MCF 10A (cell line): ENCODE measurements at regions of chr11 and their contacts with region 1.

Region 1: GRCh38 chr11:74726547-74727182 is 4.6 kb downstream of the CHRDL2 start:
- DNase-seq: peak; percentile 73
- H3K4me3 Mint-ChIP-seq: no peak overlapping the region
- H3K27ac Mint-ChIP-seq: no peak overlapping the region
- H3K4me1 Mint-ChIP-seq: peaks cover 6% of the 10 kb centered on the region
- H3K27me3 Mint-ChIP-seq: peaks cover 46% of the 10 kb centered on the region
- CTCF ChIP-seq: peak; percentile 85

Region 2: DNA sequence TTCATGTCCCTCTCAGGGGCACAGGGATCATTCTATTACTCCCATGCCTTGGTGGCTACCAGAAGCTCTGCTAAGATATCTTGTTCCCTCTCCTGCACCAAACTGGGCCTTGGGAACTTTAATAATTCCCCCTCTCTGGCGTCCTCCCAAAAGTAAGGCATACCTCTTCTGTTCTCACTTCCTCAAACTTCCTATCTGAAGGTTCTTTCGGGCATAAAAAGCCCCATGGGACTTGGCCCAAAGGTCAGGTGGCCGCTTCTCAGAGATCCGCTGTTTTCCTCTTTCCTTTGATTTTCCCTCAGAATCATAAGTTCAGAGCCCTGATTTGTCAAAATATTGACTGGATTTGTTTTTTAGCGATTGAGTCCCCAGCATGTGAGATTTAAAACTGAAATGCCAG is 121.3 kb before region 1 on chr11:
- CTCF ChIA-PET with region 1: interaction called, 20 read pairs
- POLR2A ChIA-PET with region 1: no interaction called
- intact Hi-C with region 1: no loop called
- DNase-seq: no peak
- H3K4me3 Mint-ChIP-seq: no peak overlapping the region
- H3K27ac Mint-ChIP-seq: no peak overlapping the region
- H3K4me1 Mint-ChIP-seq: no peaks in the 10 kb centered on the region
- H3K27me3 Mint-ChIP-seq: no peaks in the 10 kb centered on the region
- CTCF ChIP-seq: no peak

Region 3: GRCh38 chr11:74634537-74634936 is 92.1 kb before region 1 on chr11:
- CTCF ChIA-PET with region 1: interaction called, 82 read pairs
- POLR2A ChIA-PET with region 1: interaction called, 3 read pairs
- intact Hi-C with region 1: loop called (anchors 1 kb)
- DNase-seq: peak; percentile 94
- H3K4me3 Mint-ChIP-seq: no peak overlapping the region
- H3K27ac Mint-ChIP-seq: no peak overlapping the region
- H3K4me1 Mint-ChIP-seq: peaks cover 40% of the 10 kb centered on the region
- H3K27me3 Mint-ChIP-seq: no peaks in the 10 kb centered on the region
- CTCF ChIP-seq: peak; percentile 33

Region 4: GRCh38 chr11:74687237-74688023 is 39.2 kb before region 1 on chr11:
- CTCF ChIA-PET with region 1: interaction called, 5 read pairs
- POLR2A ChIA-PET with region 1: no interaction called
- intact Hi-C with region 1: loop called (anchors 5 kb)
- DNase-seq: peak; percentile 27
- H3K4me3 Mint-ChIP-seq: no peak overlapping the region
- H3K27ac Mint-ChIP-seq: no peak overlapping the region
- H3K4me1 Mint-ChIP-seq: peaks cover 20% of the 10 kb centered on the region
- H3K27me3 Mint-ChIP-seq: no peaks in the 10 kb centered on the region
- CTCF ChIP-seq: no peak

Region 5: DNA sequence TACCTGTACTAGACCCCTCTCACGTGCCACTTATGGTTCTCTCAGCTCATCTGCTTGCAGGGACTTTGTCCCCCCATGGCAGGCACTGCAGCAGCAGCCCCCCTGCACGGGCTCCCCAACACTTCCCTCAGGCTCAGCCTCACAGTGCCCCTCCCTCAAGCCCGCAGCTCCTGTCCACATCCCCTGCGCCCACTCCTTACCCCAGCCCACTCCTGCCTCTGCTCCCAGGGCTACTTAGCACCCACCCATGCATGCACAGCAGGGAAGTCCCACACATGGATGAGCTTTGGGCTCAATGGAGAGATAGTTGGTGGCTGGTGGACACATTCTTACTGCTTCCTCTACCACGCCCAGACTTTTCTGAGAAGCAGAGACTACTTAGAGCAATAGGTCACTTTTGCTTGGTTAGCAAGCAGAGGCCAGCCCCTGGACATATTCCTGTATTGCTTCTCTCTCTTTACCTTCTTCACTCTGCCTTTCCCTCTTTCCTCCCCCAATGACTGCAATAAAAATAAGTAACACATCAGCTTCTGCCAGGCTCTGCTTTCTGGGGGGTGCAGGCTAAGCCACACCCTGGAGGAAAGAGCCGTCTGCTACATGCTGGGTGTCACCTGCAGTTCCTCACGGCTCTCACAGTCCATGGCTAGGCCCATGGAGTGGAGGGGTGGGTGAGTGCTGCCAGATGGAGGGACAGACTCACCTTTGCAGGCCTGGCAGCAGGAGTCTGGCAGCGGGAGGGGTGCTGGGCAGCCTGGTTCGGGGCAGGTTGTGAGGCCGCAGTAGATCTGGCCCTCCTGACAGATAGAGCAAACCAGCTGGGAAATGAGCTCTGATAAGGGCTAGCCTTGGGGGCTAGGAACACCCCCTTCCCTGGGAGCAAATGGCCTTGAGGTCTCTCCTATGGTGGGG is 18.8 kb before region 1 on chr11:
- CTCF ChIA-PET with region 1: interaction called, 69 read pairs
- POLR2A ChIA-PET with region 1: interaction called, 6 read pairs
- intact Hi-C with region 1: no loop called
- DNase-seq: no peak
- H3K4me3 Mint-ChIP-seq: no peak overlapping the region
- H3K27ac Mint-ChIP-seq: no peak overlapping the region
- H3K4me1 Mint-ChIP-seq: no peaks in the 10 kb centered on the region
- H3K27me3 Mint-ChIP-seq: no peaks in the 10 kb centered on the region
- CTCF ChIP-seq: no peak